Left cardiac atrium (tissue), 4 donors: ENCODE measurements at regions of chr1 and their contacts with region 1.

Region 1: DNA sequence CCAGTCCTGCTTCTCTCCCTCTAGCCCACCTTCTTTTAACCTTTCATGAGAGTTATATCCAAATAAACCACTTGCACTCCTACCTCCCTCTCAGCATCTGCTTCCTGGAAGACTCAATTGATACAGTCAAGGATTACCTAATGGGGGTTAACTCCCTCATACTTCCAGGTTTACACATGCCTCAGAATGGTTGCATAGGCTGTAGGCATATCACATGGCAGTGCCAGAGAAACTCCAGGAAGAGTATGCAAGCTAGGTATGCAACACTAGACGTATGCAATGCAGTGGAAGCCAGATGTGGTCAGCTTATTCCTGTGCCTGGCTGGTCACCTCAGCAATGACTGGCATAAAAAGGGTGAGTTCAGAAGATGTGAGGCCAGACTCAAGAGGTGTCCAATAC is 32.7 kb upstream of the VANGL1 start:
- DNase-seq: no peak
- ATAC-seq: no peak

Region 2: GRCh38 chr1:115456441-115456961 is 152.5 kb before region 1 on chr1:
- intact Hi-C with region 1: no loop called
- DNase-seq: no peak
- ATAC-seq: peak; percentile 70 to 78

Region 3: GRCh38 chr1:115706587-115707425 is 97.8 kb after region 1 on chr1:
- intact Hi-C with region 1: loop called (anchors 2 to 10 kb)
- DNase-seq: no peak
- ATAC-seq: peak; percentile 54 to 59

Region 4: DNA sequence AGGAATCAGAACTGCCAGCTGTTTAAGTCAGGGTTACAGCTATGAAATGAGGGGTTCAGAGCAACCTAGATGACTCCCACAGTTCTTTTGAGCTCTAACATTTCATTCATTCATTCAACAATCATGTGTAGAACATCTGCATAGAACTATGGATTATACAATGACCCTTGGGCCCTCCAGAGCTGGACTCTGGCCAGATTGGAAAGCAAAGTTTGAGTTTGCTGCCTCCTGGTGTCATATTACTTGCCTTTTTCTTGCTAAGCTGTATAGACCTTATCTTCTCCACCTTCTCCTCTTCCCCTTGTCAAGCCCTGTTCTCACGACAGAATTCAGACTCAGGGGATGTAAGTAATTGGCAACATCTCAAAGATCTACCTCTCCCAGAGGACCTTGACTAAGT is 155.5 kb after region 1 on chr1:
- intact Hi-C with region 1: loop called in 1 of 2 experiments (anchors 2 kb)
- DNase-seq: peak; percentile 32
- ATAC-seq: no peak